Endothelial cell of umbilical vein (primary cell): ENCODE measurements at regions of chr11 and their contacts with region 1.

Region 1: GRCh38 chr11:61639816-61640443 is 40.3 kb upstream of the DAGLA start:
- DNase-seq: no peak
- H3K4me3 ChIP-seq: no peak overlapping the region
- H3K27ac ChIP-seq: no peak overlapping the region
- H3K4me1 ChIP-seq: no peaks in the 10 kb centered on the region
- H3K27me3 ChIP-seq: no peaks in the 10 kb centered on the region
- CTCF ChIP-seq: no peak
- POLR2A ChIP-seq: no peak

Region 2: DNA sequence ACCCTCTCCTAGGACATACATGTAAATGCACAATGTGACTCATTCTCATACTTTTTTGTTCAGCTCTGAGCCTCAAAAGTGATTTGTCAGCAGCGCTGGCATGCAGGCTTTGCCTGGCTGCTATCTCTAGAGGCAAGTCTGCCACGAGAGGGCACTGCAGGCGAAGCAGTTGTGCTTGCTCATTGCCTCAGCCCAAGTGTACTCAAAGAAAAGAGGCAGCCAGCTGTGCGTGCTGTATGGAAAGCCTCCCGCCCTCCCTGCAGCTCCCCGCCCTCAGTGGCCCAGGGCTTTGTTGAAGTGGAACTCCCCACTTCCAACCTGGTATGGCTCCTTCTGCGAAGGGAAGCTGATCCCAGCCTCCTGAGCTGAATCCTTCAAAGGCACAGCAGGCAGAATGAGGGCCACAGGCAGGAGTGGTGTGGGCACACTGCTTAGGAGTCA is 193.7 kb before region 1 on chr11:
- CTCF ChIA-PET with region 1: interaction called, 99 read pairs
- POLR2A ChIA-PET with region 1: no interaction called
- dilution Hi-C with region 1: no loop called
- intact Hi-C with region 1: loop called (anchors 1 kb)
- DNase-seq: peak; percentile 93
- H3K4me3 ChIP-seq: no peak overlapping the region
- H3K27ac ChIP-seq: no peak overlapping the region
- H3K4me1 ChIP-seq: no peaks in the 10 kb centered on the region
- H3K27me3 ChIP-seq: no peaks in the 10 kb centered on the region
- CTCF ChIP-seq: peak; percentile 91 to 94
- POLR2A ChIP-seq: no peak

Region 3: DNA sequence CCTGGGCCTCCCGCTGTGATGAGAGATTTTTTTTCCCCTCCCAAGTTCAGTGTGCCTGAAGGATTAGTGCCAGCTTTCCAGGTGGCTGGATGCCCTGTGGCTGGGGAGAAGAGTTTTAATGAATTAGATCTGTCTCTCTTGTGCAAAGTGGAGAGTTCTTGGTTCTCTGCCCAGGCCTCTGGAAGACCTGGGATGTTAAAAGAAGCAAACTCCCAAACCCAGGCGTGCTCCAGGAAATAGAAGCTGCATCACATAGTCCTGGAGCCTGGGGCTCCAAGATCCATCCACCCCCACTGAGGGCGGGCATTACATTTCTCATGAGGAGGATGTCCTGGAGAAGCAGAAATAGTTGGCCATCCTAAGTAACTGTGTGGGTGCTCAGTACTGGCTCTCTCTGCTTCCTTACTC is 179.5 kb before region 1 on chr11:
- CTCF ChIA-PET with region 1: interaction called, 13 read pairs
- POLR2A ChIA-PET with region 1: no interaction called
- dilution Hi-C with region 1: no loop called
- intact Hi-C with region 1: no loop called
- DNase-seq: no peak
- H3K4me3 ChIP-seq: no peak overlapping the region
- H3K27ac ChIP-seq: no peak overlapping the region
- H3K4me1 ChIP-seq: no peaks in the 10 kb centered on the region
- H3K27me3 ChIP-seq: no peaks in the 10 kb centered on the region
- CTCF ChIP-seq: no peak
- POLR2A ChIP-seq: no peak

Region 4: GRCh38 chr11:61477727-61478148 is 162.2 kb before region 1 on chr11:
- CTCF ChIA-PET with region 1: interaction called, 57 read pairs
- POLR2A ChIA-PET with region 1: no interaction called
- dilution Hi-C with region 1: no loop called
- intact Hi-C with region 1: loop called (anchors 1 kb)
- DNase-seq: peak; percentile 39
- H3K4me3 ChIP-seq: no peak overlapping the region
- H3K27ac ChIP-seq: no peak overlapping the region
- H3K4me1 ChIP-seq: no peaks in the 10 kb centered on the region
- H3K27me3 ChIP-seq: no peaks in the 10 kb centered on the region
- CTCF ChIP-seq: peak; percentile 80 to 89
- POLR2A ChIP-seq: no peak

Region 5: DNA sequence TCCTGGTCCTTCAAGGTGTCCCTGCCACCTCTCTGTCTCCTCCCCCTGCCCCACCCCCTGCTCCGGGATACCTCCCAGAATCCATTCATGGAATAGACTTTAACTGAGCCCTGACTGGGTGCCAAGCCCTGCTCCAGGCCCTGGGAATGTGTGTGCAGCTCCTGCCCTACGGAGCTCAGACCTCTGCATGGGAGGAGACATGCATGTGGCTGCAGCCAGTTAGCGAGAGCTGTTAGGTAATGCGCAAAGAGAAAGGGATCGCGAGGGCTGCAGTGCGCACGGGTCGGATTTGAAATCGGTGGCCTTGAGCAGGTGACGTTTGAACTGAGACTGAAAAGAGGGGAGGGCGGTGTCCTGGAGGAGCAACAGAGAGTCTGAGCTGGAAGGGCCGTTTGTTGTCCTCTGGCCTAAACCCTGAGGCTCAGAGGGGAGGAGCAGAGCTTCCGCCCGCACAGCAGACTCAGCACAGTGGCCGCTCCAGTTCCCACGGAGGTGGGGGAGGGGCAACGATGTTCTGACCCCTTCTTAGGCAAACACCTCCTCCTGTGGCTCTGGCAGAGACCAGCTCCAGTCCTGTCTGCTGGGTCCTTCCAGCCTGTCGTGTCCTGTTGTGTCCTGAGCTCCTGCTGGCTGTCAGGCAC is 151.2 kb before region 1 on chr11:
- CTCF ChIA-PET with region 1: interaction called, 12 read pairs
- POLR2A ChIA-PET with region 1: no interaction called
- dilution Hi-C with region 1: no loop called
- intact Hi-C with region 1: no loop called
- DNase-seq: no peak
- H3K4me3 ChIP-seq: no peak overlapping the region
- H3K27ac ChIP-seq: no peak overlapping the region
- H3K4me1 ChIP-seq: no peaks in the 10 kb centered on the region
- H3K27me3 ChIP-seq: no peaks in the 10 kb centered on the region
- CTCF ChIP-seq: no peak
- POLR2A ChIP-seq: no peak

Region 6: GRCh38 chr11:61532139-61533038 is 107.5 kb before region 1 on chr11:
- CTCF ChIA-PET with region 1: interaction called, 10 read pairs
- POLR2A ChIA-PET with region 1: no interaction called
- dilution Hi-C with region 1: no loop called
- intact Hi-C with region 1: no loop called
- DNase-seq: peak; percentile 25
- H3K4me3 ChIP-seq: no peak overlapping the region
- H3K27ac ChIP-seq: no peak overlapping the region
- H3K4me1 ChIP-seq: no peaks in the 10 kb centered on the region
- H3K27me3 ChIP-seq: no peaks in the 10 kb centered on the region
- CTCF ChIP-seq: peak; percentile 76 to 88
- POLR2A ChIP-seq: no peak